Mucosa of descending colon (tissue), 3 donors: ENCODE measurements at regions of chr13 and their contacts with region 1.

Region 1: DNA sequence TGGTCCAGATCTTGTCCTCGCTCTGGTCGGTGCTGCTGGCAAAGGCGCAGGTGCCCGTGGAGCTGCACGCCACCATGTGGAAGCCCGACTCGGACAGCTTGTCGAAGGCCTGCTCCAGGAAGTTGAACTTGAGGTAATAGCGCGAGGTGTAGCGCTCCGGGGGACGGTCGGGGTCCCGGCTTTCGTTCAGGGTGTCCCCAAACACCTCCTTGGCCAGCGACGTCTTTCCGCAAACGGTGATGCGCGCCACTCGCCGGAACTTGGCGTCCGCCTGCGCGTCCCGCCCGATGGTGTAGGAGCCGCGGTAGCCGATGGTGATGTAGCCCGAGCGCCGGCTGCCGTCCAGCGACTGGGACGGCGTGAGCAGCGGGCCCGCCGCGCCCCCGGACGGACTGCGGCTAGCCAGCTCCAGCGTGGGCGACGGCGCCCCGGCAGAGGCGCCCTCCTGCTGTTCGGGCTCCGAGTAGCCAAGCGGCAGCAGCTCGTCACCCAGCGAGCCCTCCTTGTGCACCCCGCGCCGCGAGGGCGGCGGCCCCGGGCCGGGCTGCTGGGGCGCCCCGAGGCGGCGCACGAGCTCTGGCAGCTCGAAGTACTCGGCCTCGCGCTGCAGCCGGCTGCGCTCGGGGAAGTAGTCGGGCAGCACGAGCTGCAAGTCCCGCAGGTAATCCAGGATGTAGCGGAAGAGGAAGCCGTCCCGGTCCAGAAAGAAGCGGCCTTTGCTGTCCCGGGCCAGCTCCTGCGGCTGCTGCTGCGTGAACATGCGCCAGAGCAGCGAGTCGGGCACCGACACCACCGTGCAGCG is 801 bp downstream of the KCTD12 start:
- DNase-seq: peak; percentile 84 to 90 (median 86)
- ATAC-seq: peak; percentile 76
- H3K4me3 ChIP-seq: peak overlapping the region; percentile 33
- H3K4me1 ChIP-seq: peaks cover 5% of the 10 kb centered on the region
- CTCF ChIP-seq: peak; percentile 10

Region 2: GRCh38 chr13:76822698-76823267 is 62.6 kb before region 1 on chr13:
- intact Hi-C with region 1: loop called in 1 of 2 experiments (anchors 2 kb)
- DNase-seq: peak in 2 of 3 donors; percentile 40 to 54
- ATAC-seq: peak; percentile 90
- H3K4me3 ChIP-seq: no peak overlapping the region
- H3K4me1 ChIP-seq: no peaks in the 10 kb centered on the region
- CTCF ChIP-seq: peak; percentile 6

Region 3: GRCh38 chr13:77009011-77009410 is 123.6 kb after region 1 on chr13:
- intact Hi-C with region 1: no loop called
- DNase-seq: no peak
- ATAC-seq: no peak
- H3K4me3 ChIP-seq: no peak overlapping the region
- H3K4me1 ChIP-seq: no peaks in the 10 kb centered on the region
- CTCF ChIP-seq: no peak